Activated CD4-positive, alpha-beta T cell treated with anti-CD3 and anti-CD28 coated beads for 36 hours (primary cell): ENCODE measurements at regions of chr6 and their contacts with region 1.

Region 1: DNA sequence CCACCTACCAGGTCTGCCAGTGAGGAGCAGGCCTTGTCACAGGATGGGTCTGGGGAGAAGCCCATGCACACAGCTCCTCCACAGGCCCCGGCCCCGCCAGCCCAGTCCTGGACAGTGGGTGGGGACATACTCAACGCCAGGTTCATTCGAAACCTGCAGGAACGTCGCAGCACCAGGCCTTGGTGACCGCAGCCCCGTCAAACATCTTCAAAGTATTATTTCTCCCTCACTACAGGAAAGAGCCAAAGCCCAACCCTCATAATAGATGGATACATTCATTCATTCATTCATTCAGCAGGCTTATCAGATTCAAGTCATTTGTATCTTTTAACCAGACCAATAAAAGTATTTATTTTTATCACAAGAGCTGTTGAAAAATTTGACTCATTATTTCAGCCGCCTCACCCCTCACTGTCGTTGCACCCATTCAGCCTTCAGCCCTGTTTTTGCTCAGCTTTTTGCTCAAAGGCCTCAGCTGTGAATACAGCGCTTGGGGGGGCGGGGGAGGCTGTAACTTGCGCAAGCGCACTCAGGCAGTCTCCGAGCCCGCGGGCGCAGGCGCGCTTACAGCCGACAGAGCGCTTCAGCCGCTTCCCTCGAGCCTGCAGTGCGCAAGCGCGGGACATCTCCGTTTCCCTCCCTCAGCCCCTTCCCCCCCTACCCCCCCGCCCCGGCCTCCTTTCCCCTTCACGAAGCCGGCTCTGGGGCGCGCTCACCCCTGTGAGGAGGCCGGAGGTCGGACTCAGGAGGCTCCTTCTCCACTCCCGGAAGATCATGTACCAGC is at the start of gene C6orf136:
- DNase-seq: peak; percentile 97
- ATAC-seq: peak; percentile 86
- H3K4me3 Mint-ChIP-seq: peak within 1 kb of the TSS; percentile 78
- H3K27ac Mint-ChIP-seq: peak within 1 kb of the TSS; percentile 88
- H3K4me1 Mint-ChIP-seq: peaks cover 20% of the 10 kb centered on the region
- H3K27me3 Mint-ChIP-seq: no peaks in the 10 kb centered on the region
- total RNA-seq, gene C6orf136: 26.5 to 30.8 TPM

Region 2: GRCh38 chr6:30571075-30571768 is 75.4 kb before region 1 on chr6 and contains the start of gene ABCF1:
- CTCF ChIA-PET with region 1: no interaction called
- POLR2A ChIA-PET with region 1: interaction called, 3 read pairs
- intact Hi-C with region 1: loop called in 1 of 2 experiments (anchors 1 kb)
- DNase-seq: peak; percentile 100
- ATAC-seq: peak; percentile 86
- H3K4me3 Mint-ChIP-seq: peak within 1 kb of the TSS; percentile 94
- H3K27ac Mint-ChIP-seq: peak within 1 kb of the TSS; percentile 100
- H3K4me1 Mint-ChIP-seq: peaks cover 62% of the 10 kb centered on the region
- H3K27me3 Mint-ChIP-seq: no peaks in the 10 kb centered on the region
- total RNA-seq, gene ABCF1: 100.0 to 105 TPM

Region 3: GRCh38 chr6:30626484-30627366 is 19.9 kb before region 1 on chr6 and contains the start of gene ATAT1:
- CTCF ChIA-PET with region 1: no interaction called
- POLR2A ChIA-PET with region 1: no interaction called
- intact Hi-C with region 1: loop called in 1 of 2 experiments (anchors 1 kb)
- DNase-seq: peak; percentile 91
- ATAC-seq: peak; percentile 98
- H3K4me3 Mint-ChIP-seq: peak within 1 kb of the TSS; percentile 93
- H3K27ac Mint-ChIP-seq: peak within 1 kb of the TSS; percentile 96
- H3K4me1 Mint-ChIP-seq: peaks cover 21% of the 10 kb centered on the region
- H3K27me3 Mint-ChIP-seq: no peaks in the 10 kb centered on the region
- total RNA-seq, gene ATAT1: 7.1 to 9.2 TPM

Region 4: DNA sequence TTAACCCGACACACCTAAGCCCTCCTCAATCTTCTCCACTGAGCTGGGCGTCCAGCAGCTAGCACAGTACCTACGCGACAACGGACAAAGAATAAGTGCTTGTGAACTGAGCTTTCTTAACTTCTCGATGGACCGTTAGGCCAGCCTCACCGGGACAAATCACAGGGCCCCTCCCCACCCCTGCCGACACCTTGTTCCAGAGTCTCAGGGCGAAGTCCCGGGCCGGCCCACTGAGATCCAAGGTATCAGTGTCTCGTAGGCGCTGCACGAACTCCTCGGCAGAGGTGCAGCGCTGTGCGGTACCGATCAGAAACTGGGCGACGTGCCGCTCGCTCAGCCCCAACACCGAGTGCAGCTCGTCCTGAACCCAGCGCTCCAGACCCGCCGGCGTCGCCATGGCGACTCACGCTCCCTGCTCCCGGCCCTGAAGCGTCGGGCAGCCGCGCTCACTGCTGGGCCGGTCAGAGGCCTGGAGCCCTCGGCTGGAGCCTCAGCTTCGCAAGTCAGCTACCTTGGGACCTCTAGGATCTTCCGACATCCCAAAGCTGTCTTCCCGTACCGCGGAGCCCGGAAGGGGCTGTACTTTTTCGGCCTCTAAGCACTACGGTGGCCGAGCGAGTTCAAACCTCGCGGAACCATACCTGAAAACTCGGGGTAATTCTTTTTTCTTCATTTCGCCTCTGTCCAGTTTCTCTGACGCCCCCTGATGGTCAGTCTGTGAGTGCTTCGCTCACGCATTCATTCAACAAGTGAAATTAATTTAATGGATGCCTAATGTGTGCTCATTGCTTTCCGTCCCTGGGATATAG is 26.0 kb after region 1 on chr6 and contains the start of gene DHX16:
- CTCF ChIA-PET with region 1: interaction called, 7 read pairs
- POLR2A ChIA-PET with region 1: no interaction called
- intact Hi-C with region 1: loop called in 1 of 2 experiments (anchors 1 kb)
- DNase-seq: peak; percentile 93
- ATAC-seq: peak; percentile 83
- H3K4me3 Mint-ChIP-seq: peak within 1 kb of the TSS; percentile 82
- H3K27ac Mint-ChIP-seq: peak within 1 kb of the TSS; percentile 83
- H3K4me1 Mint-ChIP-seq: peaks cover 27% of the 10 kb centered on the region
- H3K27me3 Mint-ChIP-seq: no peaks in the 10 kb centered on the region
- total RNA-seq, gene DHX16: 34.5 to 36.7 TPM